PC-9 (cell line): ENCODE measurements at regions of chr5 and their contacts with region 1.

Region 1: GRCh38 chr5:175329976-175330375 is 114.0 kb downstream of the DRD1 start:
- DNase-seq: no peak
- H3K4me3 ChIP-seq: no peak overlapping the region
- H3K27ac ChIP-seq: no peak overlapping the region
- H3K4me1 ChIP-seq: no peaks in the 10 kb centered on the region
- H3K27me3 ChIP-seq: peaks cover 7% of the 10 kb centered on the region; the same call in 1 of the 2 replicates
- CTCF ChIP-seq: no peak

Region 2: GRCh38 chr5:175305251-175305650 is 24.7 kb before region 1 on chr5:
- CTCF ChIA-PET with region 1: no interaction called
- POLR2A ChIA-PET with region 1: interaction called, 15 read pairs
- intact Hi-C with region 1: no loop called
- DNase-seq: no peak
- H3K4me3 ChIP-seq: no peak overlapping the region
- H3K27ac ChIP-seq: no peak overlapping the region
- H3K4me1 ChIP-seq: no peaks in the 10 kb centered on the region
- H3K27me3 ChIP-seq: no peaks in the 10 kb centered on the region; the same call in 1 of the 2 replicates
- CTCF ChIP-seq: no peak